Heart left ventricle (tissue), 16 donors: ENCODE measurements at regions of chr6 and their contacts with region 1.

Region 1: DNA sequence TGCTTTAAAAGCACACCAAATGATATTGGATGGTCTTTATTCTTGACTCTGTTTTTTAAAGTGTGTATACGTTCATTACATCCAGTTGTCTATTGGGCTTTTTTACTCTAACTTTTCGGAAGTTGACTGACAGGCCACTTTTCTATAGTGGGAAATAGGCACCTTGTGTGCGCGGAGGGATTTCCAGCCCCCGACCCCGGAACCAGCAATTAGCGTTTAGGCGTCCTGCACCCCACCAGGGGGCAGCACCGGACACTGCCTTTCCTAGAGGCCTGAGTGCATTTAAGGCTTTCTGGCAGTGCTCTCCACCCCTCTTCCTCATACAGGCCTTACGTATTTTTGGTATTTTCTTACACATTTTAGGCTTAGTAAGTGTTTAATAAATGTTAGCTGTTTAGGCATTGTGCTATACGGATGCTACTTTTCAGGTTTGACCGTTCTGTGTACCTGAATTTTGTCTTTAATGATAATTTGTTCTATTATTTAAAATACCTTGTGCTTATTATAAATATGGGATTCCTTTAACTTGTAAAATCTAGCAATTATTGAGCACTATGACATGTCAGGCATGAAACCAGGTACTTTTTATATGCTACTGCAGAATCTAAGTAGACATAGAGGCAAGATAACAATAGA is 231.8 kb downstream of the BCKDHB start:
- DNase-seq: peak; percentile 35 to 78 (median 54)
- ATAC-seq: peak in 3 of 4 donors; percentile 74 to 77 (median 76)
- H3K4me3 ChIP-seq: peak overlapping the region in 2 of 12 donors; percentile 14 to 24
- H3K27ac ChIP-seq: no peak overlapping the region
- H3K4me1 ChIP-seq: peaks cover 0 to 6% (median 0%) of the 10 kb centered on the region in 12 donors
- H3K27me3 ChIP-seq: no peaks in the 10 kb centered on the region
- CTCF ChIP-seq: peak; percentile 43 to 83 (median 70)
- POLR2A ChIP-seq: no peak

Region 2: DNA sequence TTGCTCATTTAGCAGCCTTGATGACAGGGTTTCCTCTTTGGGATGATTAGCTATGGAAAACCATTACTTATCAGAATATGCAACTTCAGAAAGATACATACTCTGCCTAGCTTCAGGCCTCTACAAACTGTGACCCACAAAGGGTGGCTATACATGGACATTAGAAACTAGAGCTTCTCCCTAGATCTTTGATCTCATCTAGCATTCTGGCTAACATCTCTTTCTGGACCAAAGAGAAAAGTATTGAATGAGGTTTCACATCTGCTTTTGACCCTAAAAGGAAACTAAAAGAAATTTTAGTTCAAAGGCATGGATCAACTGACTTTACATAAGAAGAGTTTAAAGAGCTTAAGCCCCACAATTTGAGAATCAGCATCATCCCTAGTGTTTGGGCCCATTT is 1091.4 kb before region 1 on chr6:
- intact Hi-C with region 1: no loop called
- DNase-seq: no peak
- ATAC-seq: no peak
- H3K4me3 ChIP-seq: no peak overlapping the region
- H3K27ac ChIP-seq: no peak overlapping the region
- H3K4me1 ChIP-seq: peaks cover 0 to 7% (median 0%) of the 10 kb centered on the region in 12 donors
- H3K27me3 ChIP-seq: no peaks in the 10 kb centered on the region
- CTCF ChIP-seq: no peak
- POLR2A ChIP-seq: no peak

Region 3: DNA sequence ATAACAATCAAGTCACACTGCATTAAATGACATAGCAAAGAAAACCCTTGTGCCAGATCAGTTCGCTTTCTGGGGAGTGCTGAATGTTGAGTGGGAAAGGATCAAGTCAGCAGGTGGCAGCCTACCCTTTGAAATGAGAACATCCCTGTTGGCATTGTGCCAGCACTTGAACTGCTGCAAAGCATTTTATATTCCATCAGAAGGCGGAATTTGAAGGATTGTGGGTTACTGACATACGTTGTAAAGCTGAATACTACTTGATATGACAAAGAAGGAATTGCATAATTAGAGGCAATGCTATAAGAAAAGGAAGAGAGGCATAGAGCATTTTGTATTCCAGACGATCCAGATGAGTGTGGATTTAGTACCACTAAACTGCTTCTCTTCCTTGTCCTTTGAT is 205.3 kb before region 1 on chr6:
- intact Hi-C with region 1: loop called in 2 of 10 experiments (anchors 10 kb)
- DNase-seq: peak in 4 of 5 donors; percentile 43 to 64 (median 60)
- ATAC-seq: peak; percentile 18 to 78 (median 57)
- H3K4me3 ChIP-seq: no peak overlapping the region
- H3K27ac ChIP-seq: no peak overlapping the region
- H3K4me1 ChIP-seq: peaks cover 0 to 6% (median 0%) of the 10 kb centered on the region in 12 donors
- H3K27me3 ChIP-seq: no peaks in the 10 kb centered on the region
- CTCF ChIP-seq: peak in 11 of 12 donors; percentile 30 to 71 (median 58)
- POLR2A ChIP-seq: no peak

Region 4: GRCh38 chr6:80223743-80224212 is 114.5 kb before region 1 on chr6:
- intact Hi-C with region 1: loop called in 4 of 10 experiments (anchors 10 kb)
- DNase-seq: peak in 2 of 5 donors; percentile 34 to 36
- ATAC-seq: peak in 2 of 4 donors; percentile 51 to 74
- H3K4me3 ChIP-seq: no peak overlapping the region
- H3K27ac ChIP-seq: no peak overlapping the region
- H3K4me1 ChIP-seq: no peaks in the 10 kb centered on the region
- H3K27me3 ChIP-seq: no peaks in the 10 kb centered on the region
- CTCF ChIP-seq: no peak
- POLR2A ChIP-seq: no peak

Region 5: DNA sequence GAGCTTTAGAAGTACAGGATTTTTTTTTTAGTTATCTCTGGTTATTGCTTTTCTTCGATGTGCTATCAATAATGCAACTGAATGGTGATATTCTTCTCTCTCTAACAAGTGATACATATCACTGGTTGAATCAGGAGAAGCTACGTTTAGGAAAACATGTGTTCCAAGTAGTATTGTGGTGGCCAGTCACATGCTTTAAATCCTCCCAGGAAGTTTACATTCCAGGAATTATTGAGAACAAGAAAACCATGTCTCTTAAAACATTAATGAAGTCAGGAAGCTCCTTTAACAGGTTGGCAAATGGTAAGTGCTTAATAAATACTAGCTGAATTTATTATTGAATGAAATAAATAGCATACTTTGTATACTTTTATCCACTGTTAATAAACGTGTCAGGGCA is 139.3 kb after region 1 on chr6:
- intact Hi-C with region 1: loop called in 1 of 10 experiments (anchors 10 kb)
- DNase-seq: no peak
- ATAC-seq: no peak
- H3K4me3 ChIP-seq: no peak overlapping the region
- H3K27ac ChIP-seq: no peak overlapping the region
- H3K4me1 ChIP-seq: no peaks in the 10 kb centered on the region
- H3K27me3 ChIP-seq: no peaks in the 10 kb centered on the region
- CTCF ChIP-seq: no peak
- POLR2A ChIP-seq: no peak